ENCODE measurements at regions of chr13 and their contacts with region 1.

Region 1: DNA sequence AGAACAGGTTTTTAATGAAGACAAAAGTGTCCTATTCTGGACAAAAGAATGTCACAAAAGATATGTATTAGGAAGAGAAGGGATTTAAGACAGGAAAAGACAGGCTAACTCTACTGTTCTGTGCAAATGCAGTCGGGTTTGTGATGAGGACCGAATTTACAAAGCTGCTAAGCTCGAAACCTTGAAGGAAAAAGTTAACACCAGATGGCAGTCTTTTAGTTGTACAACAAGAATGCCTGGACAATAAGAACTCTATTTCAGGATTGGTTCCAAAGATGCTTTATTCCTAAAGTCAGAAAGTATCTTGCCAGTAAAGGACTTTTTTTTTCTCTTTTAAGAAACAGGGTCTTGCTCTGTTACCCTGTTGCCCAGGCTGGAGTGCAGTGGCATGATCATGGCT is 51.1 kb downstream of the HS6ST3 start:
- DNase-seq: peak in 1 of 2 experiments; percentile 40
- H3K4me3 ChIP-seq: no peak overlapping the region
- H3K27ac ChIP-seq: no peak overlapping the region
- H3K4me1 ChIP-seq: no peaks in the 10 kb centered on the region
- H3K27me3 ChIP-seq: no peaks in the 10 kb centered on the region
- CTCF ChIP-seq: peak; percentile 45

Region 2: DNA sequence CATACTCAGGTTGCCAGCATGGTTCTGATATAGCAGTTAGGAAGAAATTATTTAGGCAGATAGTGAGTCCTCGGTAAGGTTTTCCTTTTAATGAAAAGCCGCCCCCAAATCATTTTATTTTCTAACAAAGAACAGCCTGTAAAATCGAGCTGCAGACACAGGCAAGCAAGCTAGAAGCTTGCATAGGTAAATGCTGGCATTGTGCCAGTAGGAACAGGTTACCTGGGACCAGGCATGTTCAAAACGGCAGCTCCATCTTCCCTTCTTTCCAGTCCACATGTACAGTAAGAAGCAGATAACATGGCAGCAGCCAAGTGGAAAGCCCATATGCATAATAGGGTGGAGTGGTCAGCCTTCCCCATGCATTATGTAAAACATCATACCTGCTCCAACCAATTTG is 158.9 kb before region 1 on chr13:
- CTCF ChIA-PET with region 1: no interaction called
- POLR2A ChIA-PET with region 1: no interaction called
- intact Hi-C with region 1: no loop called
- DNase-seq: no peak
- H3K4me3 ChIP-seq: no peak overlapping the region
- H3K27ac ChIP-seq: no peak overlapping the region
- H3K4me1 ChIP-seq: no peaks in the 10 kb centered on the region
- H3K27me3 ChIP-seq: no peaks in the 10 kb centered on the region
- CTCF ChIP-seq: no peak

Region 3: GRCh38 chr13:96100457-96101220 is 40.4 kb before region 1 on chr13:
- CTCF ChIA-PET with region 1: interaction called, 28 read pairs
- POLR2A ChIA-PET with region 1: no interaction called
- intact Hi-C with region 1: no loop called
- DNase-seq: no peak
- H3K4me3 ChIP-seq: no peak overlapping the region
- H3K27ac ChIP-seq: no peak overlapping the region
- H3K4me1 ChIP-seq: peaks cover 12% of the 10 kb centered on the region; the same call in 1 of the 2 replicates
- H3K27me3 ChIP-seq: no peaks in the 10 kb centered on the region
- CTCF ChIP-seq: no peak